ENCODE measurements at regions of chr5 and their contacts with region 1.

Region 1: GRCh38 chr5:1874771-1875220 is 7.9 kb downstream of the IRX4 start:
- DNase-seq: no peak
- H3K4me3 Mint-ChIP-seq: no peak overlapping the region
- H3K27ac Mint-ChIP-seq: no peak overlapping the region
- H3K4me1 Mint-ChIP-seq: no peaks in the 10 kb centered on the region
- H3K27me3 Mint-ChIP-seq: peaks cover 48% of the 10 kb centered on the region

Region 2: DNA sequence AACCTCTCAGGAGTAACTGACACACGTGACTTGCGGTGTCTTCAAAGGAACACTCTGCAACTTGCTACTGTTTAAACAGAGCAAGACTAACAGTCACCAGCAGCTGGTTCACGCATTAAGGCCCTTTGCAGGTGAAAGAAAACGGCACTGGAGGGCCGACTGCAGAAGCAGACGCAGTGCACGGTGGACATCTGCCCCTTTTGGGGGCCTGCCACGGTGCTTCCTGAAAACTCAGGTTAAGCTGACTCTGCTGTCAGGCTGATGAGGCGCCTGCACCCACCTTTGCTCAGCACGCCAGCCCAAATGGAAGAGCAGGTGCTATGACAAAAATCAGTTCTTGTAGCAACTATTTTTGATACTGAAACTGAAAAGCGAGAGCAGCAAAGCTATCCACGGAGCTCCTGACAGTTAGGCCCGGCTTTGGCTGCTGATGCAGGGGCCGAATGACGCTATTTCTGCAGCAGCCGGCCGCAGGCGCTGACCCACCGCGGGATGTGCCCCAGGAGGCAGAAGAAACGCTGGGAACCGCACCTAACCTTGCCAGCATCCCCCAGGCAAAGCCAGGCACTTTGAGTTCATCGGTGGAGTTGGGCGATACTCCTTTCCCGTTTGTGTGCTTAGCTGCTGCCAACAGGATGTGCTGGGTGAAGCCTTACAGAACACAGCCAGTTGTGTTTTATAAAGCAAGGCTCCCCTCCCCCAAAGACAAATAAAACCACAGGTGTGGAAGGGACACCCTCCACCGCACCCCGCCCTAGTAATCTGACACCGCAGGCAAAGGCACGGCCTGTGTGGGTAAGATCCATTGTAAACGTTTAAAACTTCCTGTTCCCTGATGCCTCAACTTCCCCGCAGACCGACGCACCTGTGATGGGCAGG is 558.8 kb before region 1 on chr5:
- intact Hi-C with region 1: loop called (anchors 5 kb)
- DNase-seq: peak; percentile 68
- H3K4me3 Mint-ChIP-seq: peak overlapping the region; percentile 69
- H3K27ac Mint-ChIP-seq: peak overlapping the region; percentile 92
- H3K4me1 Mint-ChIP-seq: peaks cover 55% of the 10 kb centered on the region
- H3K27me3 Mint-ChIP-seq: no peaks in the 10 kb centered on the region

Region 3: DNA sequence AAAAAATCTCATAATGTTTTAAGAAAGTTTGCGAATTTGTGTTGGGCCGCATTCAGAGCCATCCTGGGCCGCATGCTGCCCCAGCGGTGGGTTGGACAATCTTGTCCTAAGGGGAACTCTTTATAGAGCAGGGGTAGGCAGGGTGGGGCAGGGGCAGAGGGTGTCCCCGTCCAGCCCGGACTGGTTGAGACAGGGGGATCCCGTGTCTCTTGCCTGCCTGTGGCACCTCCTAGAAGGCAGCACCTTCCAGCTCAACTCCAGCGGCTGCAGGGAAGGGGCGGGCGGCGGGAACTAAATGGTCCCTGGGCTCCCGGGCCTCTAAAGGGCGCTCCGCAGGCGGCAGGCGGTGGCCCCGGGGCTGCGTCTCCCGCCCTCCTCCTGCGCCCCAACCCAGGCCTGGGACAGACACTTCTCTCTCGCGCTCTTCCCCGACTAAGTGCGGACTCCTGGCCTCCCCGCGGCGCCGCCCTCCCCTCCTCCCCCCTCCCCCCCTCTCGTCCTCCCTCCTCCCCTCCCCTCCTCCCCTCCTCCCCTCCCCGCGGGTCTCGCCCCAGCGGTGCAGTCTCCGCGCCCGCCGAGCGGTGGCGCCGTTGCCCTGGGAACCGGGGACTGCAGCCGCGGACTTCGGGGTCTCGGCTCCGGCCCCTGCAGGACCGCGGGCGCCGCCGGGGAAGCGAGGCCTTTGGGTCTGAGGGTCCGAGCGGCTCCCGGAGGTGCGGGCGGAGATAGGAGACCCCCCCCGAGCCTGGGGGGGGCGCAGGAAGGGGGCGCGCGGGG is 207.8 kb before region 1 on chr5:
- intact Hi-C with region 1: no loop called
- DNase-seq: no peak
- H3K4me3 Mint-ChIP-seq: no peak overlapping the region
- H3K27ac Mint-ChIP-seq: no peak overlapping the region
- H3K4me1 Mint-ChIP-seq: peaks cover 7% of the 10 kb centered on the region
- H3K27me3 Mint-ChIP-seq: peaks cover 48% of the 10 kb centered on the region

Region 4: DNA sequence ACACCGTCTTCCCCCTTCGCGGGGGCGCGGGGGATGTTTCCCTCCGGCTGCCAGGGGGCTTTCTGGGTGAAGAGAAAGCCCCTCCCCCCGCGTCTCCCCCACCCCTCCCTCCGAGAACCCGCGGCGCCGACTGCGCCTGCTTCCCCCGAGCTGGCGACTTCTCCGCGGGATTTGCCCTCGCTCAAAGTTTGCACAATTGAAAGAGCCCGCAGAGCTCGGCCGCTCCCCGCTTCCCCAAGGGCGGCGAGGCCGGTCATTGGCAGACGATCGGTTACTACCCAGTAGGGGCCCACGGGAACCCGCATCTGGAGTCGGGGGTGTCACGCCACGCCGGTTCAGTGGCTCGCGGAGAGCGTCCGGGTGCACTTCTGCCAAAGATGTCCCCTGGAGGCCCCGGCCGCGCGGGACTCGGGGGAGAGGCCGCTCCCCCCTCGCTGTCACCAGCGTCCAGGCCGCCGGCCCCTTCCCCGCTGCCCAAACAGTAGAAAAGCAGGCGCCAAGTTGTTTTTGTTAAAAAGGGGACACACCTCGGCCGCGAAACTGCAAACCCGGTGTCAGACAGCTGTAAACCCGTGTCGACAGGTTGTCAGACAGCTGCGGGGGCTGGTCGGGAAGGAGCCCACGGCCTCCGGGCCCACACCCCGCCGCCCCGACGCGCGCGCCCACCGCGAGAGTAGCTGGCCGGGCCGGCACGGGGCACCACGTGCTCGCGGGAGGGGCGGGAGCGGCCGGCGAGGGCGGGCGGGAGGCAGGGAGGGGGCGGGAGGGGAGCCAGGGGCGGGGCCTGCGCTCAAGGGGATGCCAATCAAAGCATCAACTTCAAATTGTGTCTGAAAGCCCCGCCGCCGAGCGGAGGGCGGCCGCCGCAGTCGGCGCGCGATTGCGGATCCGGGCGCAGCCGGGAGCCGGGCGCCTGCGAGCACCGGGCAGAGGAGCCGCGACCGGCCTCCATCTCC is 1720.5 kb after region 1 on chr5 and contains the start of gene IRX1:
- intact Hi-C with region 1: loop called (anchors 2 kb)
- DNase-seq: no peak
- H3K4me3 Mint-ChIP-seq: no peak within 1 kb of the TSS
- H3K27ac Mint-ChIP-seq: no peak within 1 kb of the TSS
- H3K4me1 Mint-ChIP-seq: no peaks in the 10 kb centered on the region
- H3K27me3 Mint-ChIP-seq: peaks cover 57% of the 10 kb centered on the region
- total RNA-seq, gene IRX1: not detected in 2 replicates